Endothelial cell of umbilical vein (primary cell): ENCODE measurements at regions of chr12 and their contacts with region 1.

Region 1: DNA sequence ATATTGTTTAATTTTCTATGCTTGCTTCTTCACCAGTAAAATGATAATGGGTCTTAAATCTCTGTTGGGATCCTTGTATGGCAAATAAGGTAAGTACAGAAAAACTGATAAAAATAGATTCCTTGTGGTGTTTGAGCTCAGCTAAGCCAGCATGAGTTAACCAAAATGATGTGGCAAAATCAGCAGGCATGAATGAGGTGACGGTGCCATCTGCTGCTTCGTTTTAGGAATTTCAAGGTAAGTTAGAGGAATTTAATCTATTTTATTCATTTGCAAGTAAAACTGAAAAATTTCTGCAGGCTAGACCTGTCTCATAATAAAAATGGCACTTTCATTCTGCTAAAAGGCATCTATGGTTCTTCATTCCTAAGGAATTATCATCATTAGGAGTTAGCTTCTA is 10.0 kb upstream of the CLEC7A start:
- DNase-seq: peak; percentile 84
- H3K4me3 ChIP-seq: no peak overlapping the region
- H3K27ac ChIP-seq: no peak overlapping the region
- H3K4me1 ChIP-seq: no peaks in the 10 kb centered on the region
- H3K27me3 ChIP-seq: no peaks in the 10 kb centered on the region
- CTCF ChIP-seq: peak; percentile 39 to 40
- POLR2A ChIP-seq: no peak

Region 2: GRCh38 chr12:9813821-9814809 is 325.9 kb before region 1 on chr12:
- CTCF ChIA-PET with region 1: interaction called, 23 read pairs
- POLR2A ChIA-PET with region 1: no interaction called
- dilution Hi-C with region 1: no loop called
- intact Hi-C with region 1: loop called (anchors 1 kb)
- DNase-seq: peak; percentile 74
- H3K4me3 ChIP-seq: peak overlapping the region in 2 of 3 experiments; percentile 3 to 28
- H3K27ac ChIP-seq: no peak overlapping the region
- H3K4me1 ChIP-seq: no peaks in the 10 kb centered on the region
- H3K27me3 ChIP-seq: peaks cover 0 to 7% of the 10 kb centered on the region in 2 experiments
- CTCF ChIP-seq: peak; percentile 93 to 99
- POLR2A ChIP-seq: no peak

Region 3: DNA sequence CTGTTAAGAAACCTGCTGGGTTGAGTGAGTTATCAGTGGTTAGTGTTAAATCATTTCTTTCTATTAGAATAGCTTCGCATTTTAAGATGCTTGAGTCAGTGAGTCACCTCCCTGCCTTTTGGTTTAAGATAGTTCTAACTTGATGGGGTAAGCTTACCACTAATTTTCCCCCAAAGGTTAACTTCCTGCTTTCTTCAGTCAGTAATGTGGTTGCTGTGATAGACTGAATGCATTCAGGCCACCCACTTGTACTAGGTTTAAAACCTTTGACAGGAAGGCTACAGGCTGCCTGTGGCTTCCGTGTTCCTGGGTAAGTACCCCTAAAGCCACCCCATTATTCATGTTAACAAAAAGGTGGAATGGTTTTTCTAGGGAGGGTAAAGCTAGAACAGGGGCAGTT is 233.1 kb before region 1 on chr12:
- CTCF ChIA-PET with region 1: no interaction called
- POLR2A ChIA-PET with region 1: no interaction called
- dilution Hi-C with region 1: no loop called
- intact Hi-C with region 1: no loop called
- DNase-seq: no peak
- H3K4me3 ChIP-seq: no peak overlapping the region
- H3K27ac ChIP-seq: no peak overlapping the region
- H3K4me1 ChIP-seq: no peaks in the 10 kb centered on the region
- H3K27me3 ChIP-seq: peaks cover 3 to 8% of the 10 kb centered on the region in 2 experiments
- CTCF ChIP-seq: no peak
- POLR2A ChIP-seq: no peak

Region 4: GRCh38 chr12:9940375-9940774 is 199.6 kb before region 1 on chr12:
- CTCF ChIA-PET with region 1: interaction called, 12 read pairs
- POLR2A ChIA-PET with region 1: no interaction called
- dilution Hi-C with region 1: no loop called
- intact Hi-C with region 1: loop called (anchors 1 kb)
- DNase-seq: peak; percentile 37
- H3K4me3 ChIP-seq: no peak overlapping the region
- H3K27ac ChIP-seq: no peak overlapping the region
- H3K4me1 ChIP-seq: no peaks in the 10 kb centered on the region
- H3K27me3 ChIP-seq: peaks cover 5 to 11% of the 10 kb centered on the region in 2 experiments
- CTCF ChIP-seq: peak in 1 of 2 donors; percentile 38
- POLR2A ChIP-seq: no peak

Region 5: GRCh38 chr12:10016881-10017280 is 123.1 kb before region 1 on chr12:
- CTCF ChIA-PET with region 1: interaction called, 94 read pairs
- POLR2A ChIA-PET with region 1: no interaction called
- dilution Hi-C with region 1: no loop called
- intact Hi-C with region 1: no loop called
- DNase-seq: peak; percentile 86
- H3K4me3 ChIP-seq: no peak overlapping the region
- H3K27ac ChIP-seq: peak overlapping the region; percentile 99
- H3K4me1 ChIP-seq: peaks cover 27% of the 10 kb centered on the region
- H3K27me3 ChIP-seq: no peaks in the 10 kb centered on the region
- CTCF ChIP-seq: no peak
- POLR2A ChIP-seq: no peak

Region 6: GRCh38 chr12:10069099-10069498 is 70.9 kb before region 1 on chr12:
- CTCF ChIA-PET with region 1: interaction called, 29 read pairs
- POLR2A ChIA-PET with region 1: interaction called, 3 read pairs
- dilution Hi-C with region 1: no loop called
- intact Hi-C with region 1: loop called (anchors 1 kb)
- DNase-seq: peak; percentile 94
- H3K4me3 ChIP-seq: no peak overlapping the region
- H3K27ac ChIP-seq: peak overlapping the region; percentile 98
- H3K4me1 ChIP-seq: peaks cover 44% of the 10 kb centered on the region
- H3K27me3 ChIP-seq: no peaks in the 10 kb centered on the region
- CTCF ChIP-seq: no peak
- POLR2A ChIP-seq: peak; percentile 25

Region 7: GRCh38 chr12:10098791-10099190 is 41.2 kb before region 1 on chr12 and contains the start of gene CLEC1A:
- CTCF ChIA-PET with region 1: interaction called, 11 read pairs
- POLR2A ChIA-PET with region 1: no interaction called
- dilution Hi-C with region 1: no loop called
- intact Hi-C with region 1: loop called (anchors 2 kb)
- DNase-seq: peak; percentile 82
- H3K4me3 ChIP-seq: peak within 1 kb of the TSS; percentile 38 to 63 (median 43)
- H3K27ac ChIP-seq: peak within 1 kb of the TSS; percentile 75
- H3K4me1 ChIP-seq: peaks cover 7% of the 10 kb centered on the region
- H3K27me3 ChIP-seq: no peaks in the 10 kb centered on the region
- CTCF ChIP-seq: no peak
- POLR2A ChIP-seq: peak; percentile 50
- total RNA-seq, gene CLEC1A: 22.5 and 24.2 TPM in 2 replicates

Region 8: GRCh38 chr12:10153271-10154144 is 13.5 kb after region 1 on chr12:
- CTCF ChIA-PET with region 1: interaction called, 13 read pairs
- POLR2A ChIA-PET with region 1: no interaction called
- dilution Hi-C with region 1: no loop called
- intact Hi-C with region 1: no loop called
- DNase-seq: peak; percentile 81
- H3K4me3 ChIP-seq: peak overlapping the region; percentile 44 to 67 (median 48)
- H3K27ac ChIP-seq: peak overlapping the region; percentile 58
- H3K4me1 ChIP-seq: peaks cover 5% of the 10 kb centered on the region
- H3K27me3 ChIP-seq: peaks cover 0 to 2% of the 10 kb centered on the region in 2 experiments
- CTCF ChIP-seq: peak; percentile 70 to 72
- POLR2A ChIP-seq: no peak

Region 9: DNA sequence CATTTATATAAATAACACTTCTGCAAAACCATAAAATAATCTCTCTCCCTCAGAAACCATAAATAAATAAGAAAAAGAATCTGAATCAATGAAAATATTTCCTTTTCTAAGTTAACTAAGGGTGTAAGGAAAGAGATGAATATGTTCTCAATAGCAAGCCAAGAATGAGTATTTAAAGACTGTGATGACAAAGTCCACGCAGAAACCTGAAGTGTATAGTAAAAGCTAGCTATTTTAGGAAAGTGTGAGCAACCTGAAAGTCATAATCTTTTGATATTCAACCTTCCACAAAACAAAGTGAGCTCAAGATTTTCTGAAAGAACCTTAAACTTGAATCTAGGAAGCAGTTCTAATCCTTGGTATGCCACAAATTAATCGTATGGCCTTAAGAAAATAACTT is 381.6 kb after region 1 on chr12:
- CTCF ChIA-PET with region 1: no interaction called
- POLR2A ChIA-PET with region 1: no interaction called
- dilution Hi-C with region 1: no loop called
- intact Hi-C with region 1: no loop called
- DNase-seq: no peak
- H3K4me3 ChIP-seq: no peak overlapping the region
- H3K27ac ChIP-seq: no peak overlapping the region
- H3K4me1 ChIP-seq: no peaks in the 10 kb centered on the region
- H3K27me3 ChIP-seq: no peaks in the 10 kb centered on the region
- CTCF ChIP-seq: no peak
- POLR2A ChIP-seq: no peak